ENCODE measurements at regions of chr15 and their contacts with region 1.

Region 1: GRCh38 chr15:72155635-72156616 is 37.7 kb downstream of the SENP8 start:
- DNase-seq: peak; percentile 68
- ATAC-seq: peak; percentile 95
- H3K4me3 ChIP-seq: peak overlapping the region; percentile 46 to 71 (median 56)
- H3K27ac ChIP-seq: no peak overlapping the region
- H3K4me1 ChIP-seq: peaks cover 14% of the 10 kb centered on the region
- H3K27me3 ChIP-seq: peaks cover 0 to 14% of the 10 kb centered on the region in 2 experiments; a peak in 3 of 5 replicates
- CTCF ChIP-seq: peak; percentile 98
- EP300 ChIP-seq: no peak
- POLR2A ChIP-seq: no peak
- RAD21 ChIP-seq: peak; percentile 86

Region 2: GRCh38 chr15:71743861-71744382 is 412.0 kb before region 1 on chr15:
- CTCF ChIA-PET with region 1: no interaction called
- POLR2A ChIA-PET with region 1: no interaction called
- in situ Hi-C with region 1: loop called (anchors 10 kb)
- intact Hi-C with region 1: no loop called
- DNase-seq: peak; percentile 39
- ATAC-seq: no peak
- H3K4me3 ChIP-seq: no peak overlapping the region
- H3K27ac ChIP-seq: no peak overlapping the region
- H3K4me1 ChIP-seq: peaks cover 41% of the 10 kb centered on the region
- H3K27me3 ChIP-seq: peaks cover 0 to 25% of the 10 kb centered on the region in 2 experiments; a peak in 3 of 5 replicates
- CTCF ChIP-seq: peak; percentile 57
- EP300 ChIP-seq: no peak
- POLR2A ChIP-seq: no peak
- RAD21 ChIP-seq: no peak

Region 3: GRCh38 chr15:71752604-71753289 is 403.2 kb before region 1 on chr15:
- CTCF ChIA-PET with region 1: interaction called, 4 read pairs
- POLR2A ChIA-PET with region 1: no interaction called
- in situ Hi-C with region 1: loop called (anchors 10 kb)
- intact Hi-C with region 1: loop called (anchors 2 kb)
- DNase-seq: peak; percentile 44
- ATAC-seq: peak; percentile 71
- H3K4me3 ChIP-seq: no peak overlapping the region
- H3K27ac ChIP-seq: no peak overlapping the region
- H3K4me1 ChIP-seq: peaks cover 32% of the 10 kb centered on the region
- H3K27me3 ChIP-seq: no peaks in the 10 kb centered on the region
- CTCF ChIP-seq: peak; percentile 60
- EP300 ChIP-seq: no peak
- POLR2A ChIP-seq: no peak
- RAD21 ChIP-seq: peak; percentile 33; the same call in 1 of the 2 replicates

Region 4: DNA sequence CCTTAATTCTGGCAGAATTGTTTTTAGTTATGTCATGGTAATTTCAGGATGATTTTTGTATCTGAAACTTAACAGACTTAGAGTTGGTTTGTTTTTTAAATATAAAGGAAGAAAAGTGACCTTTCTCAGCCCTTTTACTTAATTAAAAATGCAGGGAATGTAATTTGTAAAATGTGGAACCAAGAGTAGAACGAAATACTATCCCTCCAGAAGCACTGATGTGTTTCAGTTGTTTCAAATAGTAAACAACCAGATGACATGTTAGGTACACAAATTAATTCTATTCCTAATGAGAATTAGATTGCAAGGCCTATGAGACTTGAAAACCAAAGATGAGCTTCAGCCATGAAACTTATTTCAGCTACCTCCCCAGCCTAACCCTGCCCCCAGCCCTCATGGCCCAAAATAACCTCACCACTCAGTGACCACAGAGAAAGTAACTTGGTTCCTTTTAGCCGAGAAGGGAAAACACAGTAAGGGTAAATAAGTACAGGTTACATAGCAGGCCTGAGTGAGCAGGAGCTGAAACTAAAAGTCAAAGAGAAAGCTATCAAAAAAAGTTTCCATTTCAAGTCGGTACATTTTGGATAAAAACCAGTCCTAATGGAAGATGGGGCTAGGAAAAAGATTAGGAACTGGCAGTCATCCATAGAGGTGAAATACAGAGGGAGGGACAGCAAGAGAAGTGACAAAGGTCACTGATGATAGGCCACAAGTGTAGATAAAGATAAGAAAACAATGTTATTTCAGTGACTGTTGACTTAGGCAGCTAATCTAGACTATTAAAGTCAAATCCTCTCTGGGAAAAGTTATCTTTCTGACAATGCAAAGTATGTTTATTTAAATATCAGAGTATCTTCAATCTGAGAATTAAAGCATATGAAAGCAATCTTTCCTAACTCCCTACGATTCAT is 14.5 kb before region 1 on chr15:
- CTCF ChIA-PET with region 1: no interaction called
- POLR2A ChIA-PET with region 1: no interaction called
- in situ Hi-C with region 1: no loop called
- intact Hi-C with region 1: no loop called
- DNase-seq: peak; percentile 33
- ATAC-seq: no peak
- H3K4me3 ChIP-seq: no peak overlapping the region
- H3K27ac ChIP-seq: no peak overlapping the region
- H3K4me1 ChIP-seq: peaks cover 7% of the 10 kb centered on the region
- H3K27me3 ChIP-seq: peaks cover 2 to 7% of the 10 kb centered on the region in 2 experiments; a peak in 1 of 5 replicates
- CTCF ChIP-seq: no peak
- EP300 ChIP-seq: no peak
- POLR2A ChIP-seq: no peak
- RAD21 ChIP-seq: no peak